ENCODE measurements at regions of chr1 and their contacts with region 1.

Region 1: DNA sequence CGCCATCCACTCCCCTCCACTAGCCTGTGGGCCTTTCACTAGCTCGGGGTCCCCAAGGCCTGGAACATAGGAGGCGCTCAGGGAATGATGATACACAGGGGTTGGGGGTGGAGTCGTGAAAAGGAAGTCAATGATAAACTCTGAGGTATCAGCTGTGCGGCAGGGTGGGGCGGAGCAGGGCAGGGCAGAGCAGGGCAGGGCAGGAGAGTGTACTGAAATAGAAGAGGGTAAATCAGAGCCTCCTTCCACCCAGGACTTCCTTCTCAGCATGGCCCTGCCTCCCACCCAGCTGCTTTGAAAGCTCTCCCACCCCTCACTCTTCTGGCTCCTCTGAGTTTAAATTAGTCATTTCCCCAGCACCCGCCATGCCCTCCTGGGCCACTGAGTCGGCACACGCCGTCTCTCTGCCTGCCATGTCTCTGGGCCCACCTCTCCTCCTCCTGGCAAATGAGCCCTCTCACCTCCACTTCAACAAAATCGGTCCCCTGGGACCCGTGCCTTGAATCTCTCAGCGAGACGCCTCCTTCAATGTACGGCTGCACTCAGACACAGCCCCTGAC is 16.9 kb downstream of the CAPZB start:
- DNase-seq: no peak
- ATAC-seq: peak; percentile 80
- H3K4me3 ChIP-seq: no peak overlapping the region
- H3K27ac ChIP-seq: no peak overlapping the region
- H3K4me1 ChIP-seq: peaks cover 28% of the 10 kb centered on the region
- H3K27me3 ChIP-seq: no peaks in the 10 kb centered on the region
- CTCF ChIP-seq: no peak

Region 2: GRCh38 chr1:19514391-19514831 is 45.9 kb after region 1 on chr1:
- CTCF ChIA-PET with region 1: no interaction called
- POLR2A ChIA-PET with region 1: no interaction called
- intact Hi-C with region 1: no loop called
- DNase-seq: no peak
- ATAC-seq: no peak
- H3K4me3 ChIP-seq: no peak overlapping the region
- H3K27ac ChIP-seq: no peak overlapping the region
- H3K4me1 ChIP-seq: no peaks in the 10 kb centered on the region
- H3K27me3 ChIP-seq: no peaks in the 10 kb centered on the region
- CTCF ChIP-seq: no peak

Region 3: GRCh38 chr1:19615438-19615837 is 147.0 kb after region 1 on chr1:
- CTCF ChIA-PET with region 1: interaction called, 11 read pairs
- POLR2A ChIA-PET with region 1: no interaction called
- intact Hi-C with region 1: no loop called
- DNase-seq: no peak
- ATAC-seq: no peak
- H3K4me3 ChIP-seq: no peak overlapping the region
- H3K27ac ChIP-seq: no peak overlapping the region
- H3K4me1 ChIP-seq: peaks cover 14% of the 10 kb centered on the region
- H3K27me3 ChIP-seq: no peaks in the 10 kb centered on the region
- CTCF ChIP-seq: no peak